Activated B cell treated with CpG ODN at 0.5 μM for 24 hours (primary cell): ENCODE measurements at regions of chr22 and their contacts with region 1.

Region 1: GRCh38 chr22:39343259-39344048 is 6.3 kb upstream of the SYNGR1 start:
- DNase-seq: peak; percentile 48
- ATAC-seq: peak; percentile 97
- H3K4me3 Mint-ChIP-seq: no peak overlapping the region
- H3K27ac Mint-ChIP-seq: no peak overlapping the region
- H3K4me1 Mint-ChIP-seq: peaks cover 5% of the 10 kb centered on the region
- H3K27me3 Mint-ChIP-seq: peaks cover 9% of the 10 kb centered on the region
- CTCF ChIP-seq: peak; percentile 33

Region 2: GRCh38 chr22:39332441-39333064 is 10.9 kb before region 1 on chr22:
- CTCF ChIA-PET with region 1: interaction called, 19 read pairs
- POLR2A ChIA-PET with region 1: no interaction called
- intact Hi-C with region 1: no loop called
- DNase-seq: no peak
- ATAC-seq: no peak
- H3K4me3 Mint-ChIP-seq: no peak overlapping the region
- H3K27ac Mint-ChIP-seq: no peak overlapping the region
- H3K4me1 Mint-ChIP-seq: no peaks in the 10 kb centered on the region
- H3K27me3 Mint-ChIP-seq: no peaks in the 10 kb centered on the region
- CTCF ChIP-seq: no peak

Region 3: GRCh38 chr22:39388261-39389011 is 45.0 kb after region 1 on chr22:
- CTCF ChIA-PET with region 1: interaction called, 5 read pairs
- POLR2A ChIA-PET with region 1: no interaction called
- intact Hi-C with region 1: loop called (anchors 2 kb)
- DNase-seq: peak; percentile 66
- ATAC-seq: peak; percentile 90
- H3K4me3 Mint-ChIP-seq: peak overlapping the region; percentile 86
- H3K27ac Mint-ChIP-seq: peak overlapping the region; percentile 86
- H3K4me1 Mint-ChIP-seq: peaks cover 17% of the 10 kb centered on the region
- H3K27me3 Mint-ChIP-seq: no peaks in the 10 kb centered on the region
- CTCF ChIP-seq: no peak

Region 4: DNA sequence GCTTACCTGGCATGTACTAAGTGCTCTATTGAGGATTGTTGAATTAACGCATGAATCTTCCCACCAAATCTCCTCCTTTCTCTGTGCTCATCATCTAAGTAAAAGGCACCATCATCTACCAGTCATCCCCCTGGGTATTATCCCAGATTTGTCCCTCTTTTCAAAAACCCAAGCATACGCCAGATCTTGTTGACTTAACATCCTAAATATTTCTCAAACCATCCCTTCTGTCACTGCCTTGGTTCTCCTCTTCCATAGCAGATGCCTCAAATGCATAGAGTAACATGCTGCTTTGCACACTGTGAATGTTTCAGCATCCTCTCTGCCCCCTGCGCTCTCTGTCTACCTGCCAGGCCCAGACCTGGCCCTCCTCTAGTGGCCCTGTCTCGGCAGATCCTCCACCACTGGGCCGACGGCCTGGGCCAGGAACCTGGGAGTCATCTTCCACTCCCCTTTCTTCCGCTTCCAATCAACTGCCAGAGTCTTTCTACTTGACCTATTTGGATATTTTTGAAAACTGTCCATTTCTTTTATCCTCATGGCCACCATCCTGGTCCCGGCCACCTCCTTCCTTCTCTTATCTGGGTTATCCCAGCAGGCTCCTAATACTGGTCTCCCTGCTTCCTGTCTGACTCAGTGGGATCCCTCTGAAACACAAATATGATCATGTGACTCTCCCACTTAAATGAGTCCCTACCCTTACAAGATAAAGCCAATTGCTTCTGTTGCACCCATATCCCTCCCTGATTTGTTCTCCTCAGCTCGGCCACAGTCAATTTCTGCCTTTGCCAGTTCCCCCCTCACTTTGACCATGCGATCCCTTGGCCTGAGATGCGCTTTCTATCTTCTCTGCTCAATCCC is 52.7 kb after region 1 on chr22:
- CTCF ChIA-PET with region 1: interaction called, 17 read pairs
- POLR2A ChIA-PET with region 1: interaction called, 5 read pairs
- intact Hi-C with region 1: loop called (anchors 2 kb)
- DNase-seq: no peak
- ATAC-seq: no peak
- H3K4me3 Mint-ChIP-seq: no peak overlapping the region
- H3K27ac Mint-ChIP-seq: no peak overlapping the region
- H3K4me1 Mint-ChIP-seq: peaks cover 10% of the 10 kb centered on the region
- H3K27me3 Mint-ChIP-seq: no peaks in the 10 kb centered on the region
- CTCF ChIP-seq: no peak

Region 5: GRCh38 chr22:39514373-39514973 is 171.0 kb after region 1 on chr22:
- CTCF ChIA-PET with region 1: interaction called, 10 read pairs
- POLR2A ChIA-PET with region 1: interaction called, 7 read pairs
- intact Hi-C with region 1: loop called (anchors 1 kb)
- DNase-seq: no peak
- ATAC-seq: peak; percentile 45
- H3K4me3 Mint-ChIP-seq: no peak overlapping the region
- H3K27ac Mint-ChIP-seq: peak overlapping the region; percentile 24
- H3K4me1 Mint-ChIP-seq: peaks cover 28% of the 10 kb centered on the region
- H3K27me3 Mint-ChIP-seq: no peaks in the 10 kb centered on the region
- CTCF ChIP-seq: no peak

Region 6: GRCh38 chr22:39748877-39749276 is 405.4 kb after region 1 on chr22:
- CTCF ChIA-PET with region 1: no interaction called
- POLR2A ChIA-PET with region 1: interaction called, 12 read pairs
- intact Hi-C with region 1: no loop called
- DNase-seq: no peak
- ATAC-seq: no peak
- H3K4me3 Mint-ChIP-seq: no peak overlapping the region
- H3K27ac Mint-ChIP-seq: no peak overlapping the region
- H3K4me1 Mint-ChIP-seq: peaks cover 27% of the 10 kb centered on the region
- H3K27me3 Mint-ChIP-seq: no peaks in the 10 kb centered on the region
- CTCF ChIP-seq: no peak